HEK293T (cell line): ENCODE measurements at regions of chr14 and their contacts with region 1.

Region 1: DNA sequence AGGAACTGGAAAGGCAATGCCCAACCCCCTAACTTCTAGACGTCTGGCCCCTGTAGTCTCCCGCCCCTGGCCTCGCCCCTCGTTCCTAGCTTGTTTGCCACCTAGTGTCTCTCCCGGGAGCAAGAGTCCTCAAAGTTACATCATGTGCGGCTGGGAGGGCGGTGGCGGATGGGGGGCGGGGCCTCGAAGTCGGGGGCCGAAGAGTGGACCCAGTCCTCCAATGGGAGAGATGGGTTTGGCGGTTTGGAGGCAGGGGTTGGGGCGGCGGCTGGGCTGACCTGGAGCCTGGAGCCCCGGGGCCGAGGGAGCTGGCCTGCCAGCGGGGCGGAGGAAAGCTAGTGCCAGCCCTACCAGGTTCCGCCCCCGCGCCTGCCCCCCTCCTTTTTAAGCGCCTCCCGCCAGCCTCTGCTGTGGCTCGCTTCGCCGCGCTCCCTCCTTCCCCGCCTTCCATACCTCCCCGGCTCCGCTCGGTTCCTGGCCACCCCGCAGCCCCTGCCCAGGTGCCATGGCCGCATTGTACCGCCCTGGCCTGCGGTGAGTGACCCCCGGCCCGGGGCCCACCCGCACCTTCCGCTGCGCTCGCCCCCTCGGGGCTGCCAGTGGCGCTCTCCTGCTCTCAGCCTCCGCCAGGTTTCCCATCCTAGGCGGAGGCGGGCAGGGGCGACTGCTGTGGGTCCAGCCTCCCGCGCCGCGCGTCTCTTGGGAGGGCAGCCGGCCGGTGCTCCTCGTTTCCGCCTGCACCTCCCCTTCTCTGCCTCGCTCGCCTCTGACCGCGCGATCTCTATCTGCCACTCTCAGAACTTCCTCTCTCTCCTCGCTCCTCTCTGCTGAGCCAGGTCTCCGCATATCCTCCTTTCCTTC is at the start of gene PCK2:
- DNase-seq: peak; percentile 86

Region 2: GRCh38 chr14:24058260-24058950 is 35.7 kb before region 1 on chr14:
- CTCF ChIA-PET with region 1: interaction called, 153 read pairs
- POLR2A ChIA-PET with region 1: interaction called, 73 read pairs
- DNase-seq: peak; percentile 85

Region 3: DNA sequence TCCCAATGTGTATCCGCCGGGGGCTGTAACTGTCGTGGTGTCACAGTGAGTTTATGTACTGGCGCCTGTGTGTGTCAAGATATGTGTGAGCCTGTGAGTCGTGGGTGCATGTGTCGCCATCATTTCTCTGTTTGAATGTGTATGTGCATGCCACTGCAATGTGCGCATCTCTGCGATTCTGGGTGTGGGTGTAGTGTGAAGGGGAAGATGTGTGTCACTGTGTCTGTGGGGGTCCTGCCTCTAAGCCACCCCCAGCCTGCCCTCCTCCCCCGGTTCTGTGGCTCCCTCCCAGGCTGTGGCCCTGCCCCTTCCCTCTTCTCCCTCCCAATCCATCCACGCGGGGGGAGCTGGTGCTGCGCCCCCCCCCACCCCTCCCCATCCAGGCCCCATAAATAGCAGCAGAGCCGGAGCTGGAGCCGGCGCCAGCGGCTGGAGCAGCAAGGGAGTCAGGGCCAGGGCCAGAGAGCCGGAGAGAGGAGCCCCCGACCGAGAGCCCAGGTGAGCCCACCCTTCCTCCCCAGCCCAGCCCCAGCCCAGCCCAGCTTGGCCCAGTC is 22.9 kb before region 1 on chr14 and contains the start of gene CPNE6:
- CTCF ChIA-PET with region 1: interaction called, 8 read pairs
- POLR2A ChIA-PET with region 1: interaction called, 17 read pairs
- DNase-seq: no peak

Region 4: GRCh38 chr14:24108336-24108874 is 14.3 kb after region 1 on chr14:
- CTCF ChIA-PET with region 1: interaction called, 28 read pairs
- POLR2A ChIA-PET with region 1: interaction called, 162 read pairs
- DNase-seq: no peak

Region 5: GRCh38 chr14:24141097-24141880 is 47.2 kb after region 1 on chr14 and contains the start of gene EMC9:
- CTCF ChIA-PET with region 1: interaction called, 5 read pairs
- POLR2A ChIA-PET with region 1: interaction called, 25 read pairs
- DNase-seq: peak; percentile 91